Motor neuron (in vitro differentiated cells): ENCODE measurements at regions of chr20 and their contacts with region 1.

Region 1: GRCh38 chr20:36886859-36887751 is 11.2 kb downstream of the TLDC2 start:
- ATAC-seq: peak; percentile 93 to 99 (median 96)
- H3K4me3 ChIP-seq: no peak overlapping the region
- H3K27ac ChIP-seq: no peak overlapping the region
- H3K4me1 ChIP-seq: peaks cover 0 to 2% of the 10 kb centered on the region in 2 donors

Region 2: DNA sequence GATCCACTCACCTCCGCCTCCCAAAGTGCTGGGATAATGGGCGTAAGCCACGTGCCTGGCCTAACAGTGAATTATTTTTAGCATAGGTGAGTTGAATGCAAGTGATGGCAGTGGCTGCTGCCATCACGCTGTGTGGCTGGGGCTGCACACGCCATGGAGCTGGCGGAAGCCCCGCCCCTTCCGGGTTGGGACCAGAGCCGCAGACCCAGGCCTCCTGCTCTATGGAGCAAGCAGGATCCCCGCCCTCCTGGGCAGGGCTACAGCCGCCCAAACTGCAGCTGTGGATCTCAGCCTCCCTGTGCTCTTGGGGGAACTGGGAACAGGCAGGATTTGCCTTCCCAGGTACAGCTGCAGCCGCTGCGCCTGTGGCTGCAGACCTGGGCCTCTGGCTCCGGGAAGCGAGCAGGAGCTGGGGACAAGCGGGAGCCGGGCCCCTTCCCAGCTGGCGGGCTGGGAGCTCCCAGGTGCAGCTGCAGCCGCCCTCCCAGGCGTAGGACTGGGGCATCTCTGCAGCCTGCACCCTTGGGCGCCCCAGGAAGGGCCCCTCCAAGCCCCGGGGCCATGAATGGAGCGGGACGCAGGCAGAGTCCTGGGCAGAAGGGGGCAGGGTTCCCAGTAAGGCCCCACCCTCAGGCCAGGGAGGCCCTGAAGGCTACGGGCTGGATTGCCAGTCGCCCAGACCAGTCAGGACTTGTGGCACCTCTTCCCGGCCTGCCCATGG is 210.2 kb before region 1 on chr20:
- in situ Hi-C with region 1: loop called in 1 of 9 experiments (anchors 25 kb)
- ATAC-seq: peak in 7 of 8 experiments; percentile 23 to 99 (median 98)
- H3K4me3 ChIP-seq: peak overlapping the region in 4 of 5 donors; percentile 28 to 48 (median 35)
- H3K27ac ChIP-seq: peak overlapping the region; percentile 78 to 86
- H3K4me1 ChIP-seq: peaks cover 0 to 4% of the 10 kb centered on the region in 2 donors

Region 3: DNA sequence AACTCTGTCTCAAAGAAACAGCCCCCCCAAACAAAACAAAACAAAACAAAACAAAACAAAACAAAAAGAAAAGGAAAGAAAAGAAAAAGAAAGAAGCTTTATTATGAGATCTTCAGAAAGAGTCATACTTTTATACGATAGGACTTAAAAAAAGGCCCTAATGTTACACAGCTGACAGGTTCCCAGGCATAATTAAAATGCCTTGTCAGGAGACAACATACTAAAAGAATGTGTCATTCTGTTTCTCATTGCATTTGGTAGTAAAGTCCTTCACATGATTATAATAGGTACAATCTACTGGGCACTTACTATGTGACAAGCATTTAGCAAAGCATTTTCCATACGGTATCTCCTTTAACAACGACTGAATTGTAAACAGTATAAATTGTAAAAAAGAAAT is 255.6 kb after region 1 on chr20:
- in situ Hi-C with region 1: no loop called
- ATAC-seq: no peak
- H3K4me3 ChIP-seq: no peak overlapping the region
- H3K27ac ChIP-seq: no peak overlapping the region
- H3K4me1 ChIP-seq: no peaks in the 10 kb centered on the region